ENCODE measurements at regions of chr6 and their contacts with region 1.

Region 1: GRCh38 chr6:134822920-134823709 is 126.8 kb downstream of the ALDH8A1 start:
- DNase-seq: peak; percentile 90
- ATAC-seq: peak; percentile 95
- H3K4me3 ChIP-seq: no peak overlapping the region
- H3K27ac ChIP-seq: peak overlapping the region; percentile 77
- H3K4me1 ChIP-seq: peaks cover 11% of the 10 kb centered on the region
- H3K27me3 ChIP-seq: no peaks in the 10 kb centered on the region
- CTCF ChIP-seq: peak; percentile 99
- POLR2A ChIP-seq: no peak; the same call in 1 of the 2 replicates
- RAD21 ChIP-seq: peak; percentile 100

Region 2: GRCh38 chr6:134123666-134124208 is 699.4 kb before region 1 on chr6:
- CTCF ChIA-PET with region 1: no interaction called
- POLR2A ChIA-PET with region 1: interaction called, 12 read pairs
- dilution Hi-C with region 1: no loop called
- in situ Hi-C with region 1: no loop called
- intact Hi-C with region 1: no loop called
- DNase-seq: peak; percentile 72
- ATAC-seq: peak; percentile 77
- H3K4me3 ChIP-seq: no peak overlapping the region
- H3K27ac ChIP-seq: no peak overlapping the region
- H3K4me1 ChIP-seq: no peaks in the 10 kb centered on the region; the same call in 1 of the 2 replicates
- H3K27me3 ChIP-seq: no peaks in the 10 kb centered on the region
- CTCF ChIP-seq: peak; percentile 64
- POLR2A ChIP-seq: no peak
- RAD21 ChIP-seq: peak; percentile 62

Region 3: GRCh38 chr6:134161036-134161435 is 662.1 kb before region 1 on chr6:
- CTCF ChIA-PET with region 1: interaction called, 6 read pairs
- POLR2A ChIA-PET with region 1: interaction called, 3 read pairs
- dilution Hi-C with region 1: loop called (anchors 10 kb)
- in situ Hi-C with region 1: loop called (anchors 5 kb)
- intact Hi-C with region 1: loop called (anchors 1 kb)
- DNase-seq: peak; percentile 45
- ATAC-seq: no peak
- H3K4me3 ChIP-seq: no peak overlapping the region
- H3K27ac ChIP-seq: no peak overlapping the region
- H3K4me1 ChIP-seq: no peaks in the 10 kb centered on the region; the same call in 1 of the 2 replicates
- H3K27me3 ChIP-seq: no peaks in the 10 kb centered on the region
- CTCF ChIP-seq: no peak
- POLR2A ChIP-seq: no peak
- RAD21 ChIP-seq: no peak

Region 4: DNA sequence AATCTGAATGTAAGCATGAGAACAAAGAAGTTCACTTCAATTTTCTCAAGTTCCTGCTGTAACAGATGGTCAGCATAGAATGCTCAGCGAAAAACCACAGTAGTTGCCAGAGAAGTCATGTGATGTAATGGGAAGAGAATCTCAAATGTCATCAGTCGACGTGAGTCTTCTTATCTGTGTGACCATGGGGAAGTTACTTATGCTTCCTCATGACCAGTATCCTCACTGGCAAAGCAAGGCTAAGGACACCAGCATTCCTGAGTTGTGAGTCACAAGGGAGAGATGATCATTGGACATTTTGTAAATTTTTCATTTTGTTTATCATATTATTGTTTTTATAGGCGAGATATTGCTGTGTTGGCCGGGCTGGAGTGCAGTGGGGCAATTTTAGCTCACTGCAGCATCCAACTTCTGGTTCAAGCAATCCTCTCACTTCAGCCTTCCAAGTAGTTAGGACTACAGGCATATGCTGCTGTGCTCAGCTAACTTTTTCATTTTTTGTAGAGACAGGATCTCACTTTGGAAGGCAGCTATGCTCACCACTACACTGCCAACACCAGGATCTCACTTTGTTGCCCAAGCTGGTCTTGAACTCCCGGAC is 527.1 kb before region 1 on chr6:
- CTCF ChIA-PET with region 1: no interaction called
- POLR2A ChIA-PET with region 1: no interaction called
- dilution Hi-C with region 1: no loop called
- in situ Hi-C with region 1: no loop called
- intact Hi-C with region 1: loop called (anchors 5 kb)
- DNase-seq: peak; percentile 100
- ATAC-seq: peak; percentile 95
- H3K4me3 ChIP-seq: no peak overlapping the region
- H3K27ac ChIP-seq: peak overlapping the region; percentile 96
- H3K4me1 ChIP-seq: peaks cover 14% of the 10 kb centered on the region
- H3K27me3 ChIP-seq: no peaks in the 10 kb centered on the region
- CTCF ChIP-seq: no peak
- POLR2A ChIP-seq: peak; percentile 40
- RAD21 ChIP-seq: peak; percentile 14

Region 5: DNA sequence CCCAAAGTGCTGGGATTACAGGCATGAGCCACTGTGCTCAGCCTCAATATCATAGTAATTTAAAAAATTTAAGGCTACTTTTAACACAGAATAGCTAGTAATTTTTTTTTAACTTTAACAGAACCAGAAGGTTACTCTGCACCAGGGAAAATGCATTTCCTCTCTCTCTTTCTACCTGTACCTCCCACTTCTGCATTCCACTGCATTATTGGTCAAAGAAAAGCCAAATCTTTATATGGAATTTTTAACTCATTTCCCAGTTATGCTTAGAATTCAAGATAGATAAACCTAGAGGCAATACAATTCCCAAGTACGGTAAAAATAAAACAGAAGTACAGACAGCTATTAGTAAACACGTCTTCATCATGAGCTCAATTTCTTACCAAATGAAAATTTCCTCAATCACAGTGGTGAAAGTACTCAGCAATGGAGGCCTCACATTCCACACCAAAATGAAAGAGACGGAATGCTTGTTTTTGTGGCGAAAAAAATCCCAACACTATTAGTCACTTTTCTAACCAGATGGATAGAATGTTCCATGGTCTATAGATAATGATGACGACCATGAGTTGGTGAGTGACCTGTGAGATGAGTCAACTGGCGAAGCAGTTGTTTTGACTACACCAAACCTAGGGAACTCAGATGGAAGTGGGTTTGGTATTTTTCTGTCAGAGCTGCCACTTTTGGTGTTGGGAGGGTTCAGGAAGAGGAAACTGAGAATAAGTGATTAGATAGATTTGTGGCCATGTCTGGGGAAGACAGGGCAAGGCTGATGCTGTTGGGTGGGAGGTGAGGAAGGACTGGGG is 400.5 kb before region 1 on chr6:
- CTCF ChIA-PET with region 1: no interaction called
- POLR2A ChIA-PET with region 1: no interaction called
- dilution Hi-C with region 1: no loop called
- in situ Hi-C with region 1: no loop called
- intact Hi-C with region 1: loop called (anchors 5 kb)
- DNase-seq: peak; percentile 100
- ATAC-seq: peak; percentile 66
- H3K4me3 ChIP-seq: no peak overlapping the region
- H3K27ac ChIP-seq: peak overlapping the region; percentile 96
- H3K4me1 ChIP-seq: peaks cover 19% of the 10 kb centered on the region
- H3K27me3 ChIP-seq: no peaks in the 10 kb centered on the region
- CTCF ChIP-seq: no peak
- POLR2A ChIP-seq: peak; percentile 40; the same call in 1 of the 2 replicates
- RAD21 ChIP-seq: peak; percentile 24

Region 6: DNA sequence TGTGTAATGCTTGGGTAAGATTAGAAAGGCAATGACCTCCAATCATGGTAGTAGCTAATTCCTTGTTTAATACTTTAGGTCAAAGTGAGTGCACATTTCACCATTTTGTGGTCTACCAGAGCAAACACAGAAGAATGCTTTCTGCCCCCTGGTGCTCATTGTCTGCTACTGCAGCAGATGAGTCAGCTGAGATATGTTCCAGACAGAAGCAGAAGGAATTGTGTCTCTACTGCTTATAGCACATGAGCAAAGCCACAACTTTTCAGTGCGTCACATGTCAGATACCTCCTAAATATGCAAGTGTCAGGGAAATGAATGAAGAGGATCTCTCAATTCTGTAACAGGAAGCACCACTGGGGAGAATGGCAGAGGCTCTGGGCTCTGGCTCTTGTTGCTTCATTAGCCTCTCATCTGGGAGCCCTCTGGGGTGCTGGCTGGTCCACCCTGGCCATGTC is 182.1 kb before region 1 on chr6:
- CTCF ChIA-PET with region 1: interaction called, 11 read pairs
- POLR2A ChIA-PET with region 1: no interaction called
- dilution Hi-C with region 1: loop called (anchors 10 kb)
- in situ Hi-C with region 1: no loop called
- intact Hi-C with region 1: loop called (anchors 1 kb)
- DNase-seq: peak; percentile 95
- ATAC-seq: peak; percentile 89
- H3K4me3 ChIP-seq: no peak overlapping the region
- H3K27ac ChIP-seq: no peak overlapping the region
- H3K4me1 ChIP-seq: peaks cover 9% of the 10 kb centered on the region
- H3K27me3 ChIP-seq: no peaks in the 10 kb centered on the region
- CTCF ChIP-seq: peak; percentile 95
- POLR2A ChIP-seq: no peak
- RAD21 ChIP-seq: peak; percentile 93

Region 7: DNA sequence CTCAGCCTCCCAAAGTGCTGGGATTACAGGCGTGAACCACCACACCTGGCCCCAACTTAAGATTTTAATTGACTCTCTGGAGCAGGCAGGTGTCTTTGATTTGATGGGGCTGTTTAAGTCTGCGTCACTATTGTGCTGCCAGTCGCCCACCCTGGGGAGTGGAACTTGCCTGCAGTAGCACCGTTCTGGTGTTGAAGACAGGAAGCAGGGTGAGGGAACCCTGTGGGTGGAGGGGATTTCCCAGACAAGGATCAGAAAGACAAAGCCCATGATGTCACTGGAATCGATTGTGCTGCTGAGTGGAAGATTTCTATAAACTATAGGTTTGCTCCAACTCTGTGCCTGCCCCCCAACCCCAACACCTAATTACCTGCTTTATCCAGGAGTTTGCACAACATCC is 115.8 kb after region 1 on chr6:
- CTCF ChIA-PET with region 1: interaction called, 5 read pairs
- POLR2A ChIA-PET with region 1: no interaction called
- dilution Hi-C with region 1: no loop called
- in situ Hi-C with region 1: no loop called
- intact Hi-C with region 1: loop called (anchors 1 kb)
- DNase-seq: peak; percentile 72
- ATAC-seq: no peak
- H3K4me3 ChIP-seq: no peak overlapping the region
- H3K27ac ChIP-seq: no peak overlapping the region
- H3K4me1 ChIP-seq: peaks cover 18% of the 10 kb centered on the region
- H3K27me3 ChIP-seq: no peaks in the 10 kb centered on the region
- CTCF ChIP-seq: no peak
- POLR2A ChIP-seq: no peak
- RAD21 ChIP-seq: no peak